ENCODE measurements at regions of chr11 and their contacts with region 1.

Region 1: DNA sequence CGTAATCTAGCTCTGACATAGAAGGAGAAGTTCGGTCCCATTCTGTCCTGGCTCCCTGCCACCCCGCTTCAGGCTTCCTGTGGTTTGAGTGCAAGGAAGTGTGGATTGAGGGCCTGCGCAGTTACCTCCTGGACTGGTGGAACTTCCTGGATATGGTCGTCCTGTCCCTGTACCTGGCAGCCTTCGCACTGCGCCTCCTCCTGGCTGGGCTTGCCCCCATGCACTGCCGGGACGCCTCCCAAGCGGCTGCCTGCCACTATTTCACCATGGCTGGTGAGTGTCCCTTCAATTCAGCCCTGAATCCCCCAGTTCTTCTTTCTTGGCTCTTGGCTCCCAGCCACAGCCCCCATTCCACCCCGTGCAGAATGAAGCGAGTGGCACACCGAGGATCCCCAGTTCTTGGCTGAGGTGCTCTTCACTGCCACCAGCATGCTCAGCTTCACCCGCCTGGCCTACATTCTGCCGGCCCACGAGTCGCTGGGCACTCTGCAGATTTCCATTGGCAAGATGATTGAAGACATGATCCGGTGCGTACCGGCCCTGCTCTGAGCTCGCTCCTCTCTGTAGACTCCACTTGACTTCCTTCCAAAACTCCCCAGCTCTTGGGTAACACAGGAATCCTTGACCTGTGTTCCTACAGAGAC is 15.4 kb downstream of the ART5 start:
- DNase-seq: no peak
- H3K4me3 ChIP-seq: no peak overlapping the region
- H3K27me3 ChIP-seq: no peaks in the 10 kb centered on the region
- CTCF ChIP-seq: no peak

Region 2: GRCh38 chr11:3609416-3610265 is 16.8 kb before region 1 on chr11:
- CTCF ChIA-PET with region 1: interaction called, 10 read pairs
- POLR2A ChIA-PET with region 1: no interaction called
- DNase-seq: no peak
- H3K4me3 ChIP-seq: no peak overlapping the region
- H3K27me3 ChIP-seq: no peaks in the 10 kb centered on the region
- CTCF ChIP-seq: peak; percentile 94

Region 3: GRCh38 chr11:3642071-3642951 is 15.9 kb after region 1 on chr11:
- CTCF ChIA-PET with region 1: no interaction called
- POLR2A ChIA-PET with region 1: no interaction called
- DNase-seq: peak; percentile 39
- H3K4me3 ChIP-seq: peak overlapping the region; percentile 56
- H3K27me3 ChIP-seq: peaks cover 2% of the 10 kb centered on the region; the same call in 1 of the 2 replicates
- CTCF ChIP-seq: no peak